ENCODE measurements at regions of chr11 and their contacts with region 1.

Region 1: GRCh38 chr11:58654079-58654907 is 31.8 kb downstream of the CNTF start:
- DNase-seq: peak; percentile 53
- H3K4me3 Mint-ChIP-seq: no peak overlapping the region
- H3K27ac Mint-ChIP-seq: no peak overlapping the region
- H3K4me1 Mint-ChIP-seq: peaks cover 14% of the 10 kb centered on the region
- H3K27me3 Mint-ChIP-seq: peaks cover 5% of the 10 kb centered on the region

Region 2: GRCh38 chr11:58354727-58355126 is 299.6 kb before region 1 on chr11:
- intact Hi-C with region 1: no loop called
- DNase-seq: no peak
- H3K4me3 Mint-ChIP-seq: no peak overlapping the region
- H3K27ac Mint-ChIP-seq: no peak overlapping the region
- H3K4me1 Mint-ChIP-seq: no peaks in the 10 kb centered on the region
- H3K27me3 Mint-ChIP-seq: no peaks in the 10 kb centered on the region

Region 3: GRCh38 chr11:58675334-58676155 is 21.3 kb after region 1 on chr11:
- intact Hi-C with region 1: loop called (anchors 1 kb)
- DNase-seq: peak; percentile 48
- H3K4me3 Mint-ChIP-seq: no peak overlapping the region
- H3K27ac Mint-ChIP-seq: no peak overlapping the region
- H3K4me1 Mint-ChIP-seq: no peaks in the 10 kb centered on the region
- H3K27me3 Mint-ChIP-seq: peaks cover 2% of the 10 kb centered on the region

Region 4: DNA sequence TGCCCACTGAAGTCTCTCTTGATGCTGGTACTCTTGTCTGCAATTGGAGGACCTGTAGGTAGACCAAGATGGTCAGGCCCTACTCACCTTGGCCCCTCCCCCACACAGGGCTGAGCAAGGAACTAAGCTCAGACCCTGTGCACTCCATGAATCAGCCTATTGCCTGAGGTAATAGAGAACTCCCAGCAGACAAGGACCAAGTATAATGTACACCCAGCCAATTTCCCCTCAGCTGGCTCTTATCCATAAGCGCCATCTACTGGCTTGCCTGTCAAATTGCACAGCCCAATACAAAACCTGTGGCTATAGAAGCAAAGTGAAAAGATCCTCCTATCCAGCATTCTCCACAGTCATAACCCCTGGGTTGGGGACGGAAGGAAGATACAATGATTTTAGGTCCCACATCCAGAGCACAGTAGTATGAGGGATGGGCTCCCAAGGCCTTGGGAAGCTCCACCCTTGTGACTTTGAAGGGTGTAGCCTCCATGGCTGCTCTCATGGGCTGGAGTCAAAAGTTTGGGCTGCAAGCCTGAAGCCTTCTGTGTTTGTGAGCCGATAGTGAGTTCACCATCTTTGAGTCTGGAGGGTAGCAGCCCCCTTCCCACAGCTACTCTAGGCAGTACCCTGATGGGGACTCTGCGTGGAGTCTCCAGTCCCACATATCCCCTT is 134.2 kb after region 1 on chr11:
- intact Hi-C with region 1: loop called (anchors 1 kb)
- DNase-seq: peak; percentile 34
- H3K4me3 Mint-ChIP-seq: no peak overlapping the region
- H3K27ac Mint-ChIP-seq: no peak overlapping the region
- H3K4me1 Mint-ChIP-seq: no peaks in the 10 kb centered on the region
- H3K27me3 Mint-ChIP-seq: peaks cover 5% of the 10 kb centered on the region

Region 5: GRCh38 chr11:58856806-58857205 is 202.5 kb after region 1 on chr11:
- intact Hi-C with region 1: no loop called
- DNase-seq: no peak
- H3K4me3 Mint-ChIP-seq: no peak overlapping the region
- H3K27ac Mint-ChIP-seq: no peak overlapping the region
- H3K4me1 Mint-ChIP-seq: no peaks in the 10 kb centered on the region
- H3K27me3 Mint-ChIP-seq: peaks cover 2% of the 10 kb centered on the region

Region 6: DNA sequence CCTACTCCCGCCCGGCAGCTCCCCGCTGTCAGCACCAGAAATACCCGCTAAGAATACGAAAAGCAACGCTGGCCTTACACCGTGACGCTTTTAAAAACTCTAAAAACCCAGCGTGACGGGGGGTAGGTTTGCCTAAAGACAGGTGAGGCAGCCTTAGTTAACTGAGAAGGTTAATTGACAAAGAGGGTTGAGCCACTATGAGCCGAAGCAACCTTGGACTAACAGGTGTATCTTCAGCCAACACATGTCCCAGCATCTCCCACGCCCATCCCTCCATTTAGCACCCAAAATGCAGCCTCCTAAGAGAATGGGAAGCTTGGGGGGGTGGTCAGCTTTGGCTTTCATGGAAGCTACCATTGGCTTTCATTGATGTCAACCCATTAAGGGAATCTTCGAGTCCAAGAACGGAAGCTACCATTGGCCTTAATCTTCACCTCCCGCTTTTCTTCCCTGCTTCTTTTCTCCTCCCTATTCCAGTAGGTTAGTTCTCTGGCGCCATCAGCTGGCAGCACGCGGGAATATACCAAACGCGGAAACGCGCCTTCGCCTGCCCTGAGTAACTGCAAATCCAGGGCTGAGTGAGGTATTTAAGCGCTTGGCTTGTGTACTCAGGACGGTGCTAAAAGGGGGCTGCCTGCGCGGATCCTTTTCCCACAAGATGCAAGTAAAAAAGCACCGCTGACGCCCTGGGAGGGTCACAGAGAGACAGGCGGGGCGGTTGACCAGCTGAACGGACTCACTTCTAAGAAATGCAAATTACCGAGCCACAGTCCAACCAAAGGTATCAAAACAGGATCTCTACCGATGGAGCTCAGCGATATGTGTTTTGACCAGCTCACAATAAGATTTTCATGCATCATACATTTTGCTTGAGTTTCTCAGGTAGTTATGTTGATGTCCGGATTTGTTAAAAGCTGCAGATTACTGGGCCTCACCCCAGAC is 246.5 kb after region 1 on chr11:
- intact Hi-C with region 1: loop called (anchors 2 kb)
- DNase-seq: peak; percentile 9
- H3K4me3 Mint-ChIP-seq: no peak overlapping the region
- H3K27ac Mint-ChIP-seq: no peak overlapping the region
- H3K4me1 Mint-ChIP-seq: no peaks in the 10 kb centered on the region
- H3K27me3 Mint-ChIP-seq: peaks cover 32% of the 10 kb centered on the region

Region 7: DNA sequence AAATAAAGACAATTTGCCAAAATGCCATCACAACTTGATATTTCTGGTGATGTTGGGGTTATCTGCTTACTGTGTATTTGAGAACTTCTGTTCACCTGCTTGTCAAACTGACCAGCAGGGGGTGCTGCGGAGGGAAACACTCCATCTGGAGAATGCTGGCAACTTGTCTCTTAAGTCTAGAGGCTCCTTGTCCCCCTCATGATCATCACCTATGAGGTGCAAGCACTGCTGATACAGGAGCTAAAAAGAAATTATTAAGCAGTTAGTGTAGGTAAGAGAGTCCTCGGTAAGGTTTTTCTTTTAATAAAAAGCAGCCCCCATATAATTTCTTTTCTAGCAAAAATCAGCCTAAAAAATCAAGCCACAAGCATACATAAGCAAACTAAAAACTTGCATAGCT is 399.1 kb after region 1 on chr11:
- intact Hi-C with region 1: loop called (anchors 1 kb)
- DNase-seq: peak; percentile 58
- H3K4me3 Mint-ChIP-seq: no peak overlapping the region
- H3K27ac Mint-ChIP-seq: no peak overlapping the region
- H3K4me1 Mint-ChIP-seq: peaks cover 8% of the 10 kb centered on the region
- H3K27me3 Mint-ChIP-seq: peaks cover 31% of the 10 kb centered on the region

Region 8: DNA sequence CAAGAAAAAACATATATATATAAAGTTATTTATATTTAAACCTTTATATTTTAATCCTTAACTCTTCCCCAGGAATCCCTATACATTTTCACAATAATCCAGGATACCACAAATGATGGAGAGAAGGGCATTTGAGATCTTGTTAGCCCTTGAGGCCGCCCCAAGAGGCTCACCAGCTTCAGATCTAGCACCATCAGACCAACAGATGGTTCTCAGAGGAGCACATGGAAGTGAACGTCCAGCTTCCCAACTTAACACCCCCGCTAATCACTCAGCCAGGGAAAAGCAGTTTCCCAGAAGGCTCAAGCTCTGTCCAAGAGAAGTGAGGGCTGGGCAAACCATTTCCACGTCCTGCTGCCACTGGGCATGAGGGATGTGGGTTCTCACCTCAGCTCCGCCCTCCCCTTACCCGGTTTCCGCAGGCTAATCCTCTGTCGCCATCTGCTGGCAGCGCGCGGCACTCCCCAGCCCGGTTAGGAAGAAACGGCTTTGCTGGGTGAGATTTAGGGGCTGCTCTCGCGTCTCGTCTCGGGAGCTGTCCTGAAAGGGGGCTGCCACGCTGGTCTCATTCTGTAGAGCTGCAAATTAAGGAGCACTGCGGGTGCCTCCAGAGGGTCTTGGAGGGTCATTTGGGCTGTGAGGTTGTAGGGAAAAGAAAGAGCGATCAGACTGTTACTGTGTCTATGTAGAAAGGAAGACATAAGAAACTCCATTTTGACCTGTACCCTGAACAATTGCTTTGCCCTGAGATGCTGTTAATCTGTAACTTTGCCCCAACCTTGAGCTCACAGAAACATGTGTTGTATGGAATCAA is 481.6 kb after region 1 on chr11:
- intact Hi-C with region 1: loop called (anchors 1 kb)
- DNase-seq: peak; percentile 82
- H3K4me3 Mint-ChIP-seq: peak overlapping the region; percentile 60
- H3K27ac Mint-ChIP-seq: no peak overlapping the region
- H3K4me1 Mint-ChIP-seq: peaks cover 14% of the 10 kb centered on the region
- H3K27me3 Mint-ChIP-seq: no peaks in the 10 kb centered on the region

Region 9: GRCh38 chr11:59158206-59159068 is 504.1 kb after region 1 on chr11:
- intact Hi-C with region 1: loop called (anchors 1 kb)
- DNase-seq: peak; percentile 55
- H3K4me3 Mint-ChIP-seq: no peak overlapping the region
- H3K27ac Mint-ChIP-seq: peak overlapping the region; percentile 30
- H3K4me1 Mint-ChIP-seq: peaks cover 9% of the 10 kb centered on the region
- H3K27me3 Mint-ChIP-seq: peaks cover 11% of the 10 kb centered on the region

Measured in activated T-helper 1 cell treated with anti-CD3 and anti-CD28 coated beads, Interleukin-12 subunit alpha, Interleukin-12 subunit beta, Interleukin-2, Interleukin-4 antibody, amounts not matched to agents 30 ng/mL and 10 ng/mL and 1 ng/mL, durations not matched to agents 14 hours and 24 hours and 36 hours (primary cell).